Activated CD4-positive, alpha-beta memory T cell treated with anti-CD3 and anti-CD28 coated beads for 36 hours (primary cell): ENCODE measurements at regions of chr17 and their contacts with region 1.

Region 1: DNA sequence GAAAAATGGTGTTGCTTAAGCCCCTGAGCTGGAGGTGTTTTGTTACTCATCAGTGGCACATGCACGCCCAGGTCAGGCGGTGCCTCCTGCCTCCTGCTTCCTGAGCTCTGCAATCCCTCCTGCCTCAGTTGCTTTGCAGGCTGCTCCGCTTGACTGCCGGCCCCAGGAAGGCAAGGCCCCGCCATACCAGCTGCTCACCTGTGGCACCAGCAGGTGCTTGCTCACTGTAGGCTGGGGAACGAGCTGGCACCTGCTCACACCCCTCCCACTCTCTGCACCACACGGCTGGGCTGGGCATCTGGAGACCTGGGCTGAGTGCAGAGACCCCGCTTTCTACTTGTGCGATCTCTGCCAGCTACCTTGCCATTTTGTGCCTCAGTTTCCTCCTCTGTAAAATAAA is 200.2 kb downstream of the RBFOX3 start:
- DNase-seq: no peak
- H3K4me3 Mint-ChIP-seq: no peak overlapping the region
- H3K27ac Mint-ChIP-seq: no peak overlapping the region
- H3K4me1 Mint-ChIP-seq: no peaks in the 10 kb centered on the region
- H3K27me3 Mint-ChIP-seq: peaks cover 35% of the 10 kb centered on the region

Region 2: DNA sequence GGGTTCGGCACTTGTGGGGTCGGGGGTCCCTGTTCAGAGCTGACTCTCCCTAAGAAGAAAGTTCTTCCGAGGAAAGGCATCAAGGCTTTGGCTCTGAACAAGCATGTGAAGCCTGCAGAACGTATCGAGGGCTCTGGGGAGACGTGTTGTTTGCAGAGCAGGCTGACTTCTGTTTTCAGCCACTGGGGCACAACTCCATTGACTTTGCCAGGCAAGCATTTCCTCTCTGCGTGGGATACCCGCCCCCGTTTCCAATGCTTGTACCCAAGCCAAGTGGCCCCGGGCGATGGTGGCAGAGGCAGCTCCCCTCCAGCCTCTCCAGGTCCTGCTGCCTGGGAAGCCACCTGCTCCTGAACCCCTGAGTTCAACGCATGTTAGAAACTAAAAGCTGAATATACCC is 55.5 kb before region 1 on chr17:
- CTCF ChIA-PET with region 1: no interaction called
- POLR2A ChIA-PET with region 1: no interaction called
- intact Hi-C with region 1: no loop called
- DNase-seq: no peak
- H3K4me3 Mint-ChIP-seq: no peak overlapping the region
- H3K27ac Mint-ChIP-seq: no peak overlapping the region
- H3K4me1 Mint-ChIP-seq: no peaks in the 10 kb centered on the region
- H3K27me3 Mint-ChIP-seq: peaks cover 29% of the 10 kb centered on the region

Region 3: DNA sequence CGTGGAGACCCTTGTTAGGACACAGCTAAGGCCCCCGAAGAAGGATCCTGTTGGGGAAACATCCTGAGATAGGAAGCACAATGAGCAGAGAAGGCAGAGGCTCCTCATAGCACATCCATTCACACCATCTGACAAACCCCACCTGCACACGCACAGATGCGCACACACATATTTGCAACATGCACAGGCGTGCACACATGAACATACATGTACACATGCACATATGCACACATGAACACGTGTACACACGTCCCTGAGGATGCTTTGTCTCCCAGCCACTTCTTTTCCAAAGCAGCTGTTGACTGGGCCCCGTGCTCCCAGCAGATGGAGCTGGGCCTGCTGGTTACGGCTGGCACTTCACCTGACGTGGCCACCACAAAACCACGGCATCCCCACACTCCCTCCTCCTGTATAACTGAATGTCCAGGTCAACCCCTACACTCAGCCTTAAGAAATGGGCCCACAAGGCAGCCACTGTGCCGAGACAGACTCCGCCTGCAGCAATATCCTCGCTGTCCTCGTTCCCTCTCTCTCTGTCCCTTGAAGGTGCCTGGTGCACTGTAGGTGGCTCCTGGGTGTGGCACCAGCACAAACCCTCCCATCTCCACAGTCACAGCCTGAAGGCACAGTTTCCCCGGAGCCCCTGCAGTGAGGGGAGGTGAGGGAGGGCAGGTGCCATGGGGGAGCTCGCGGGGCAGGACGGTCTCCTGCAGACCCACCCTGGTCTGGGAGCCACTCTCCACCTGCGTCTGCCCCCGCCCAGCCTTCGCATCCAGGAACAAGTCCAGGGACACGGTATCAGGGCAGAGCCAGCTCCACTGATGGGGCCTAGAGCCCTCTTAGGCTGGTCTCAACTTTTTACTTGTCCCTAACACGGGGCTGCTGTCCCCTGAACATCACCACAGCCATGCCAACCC is 17.2 kb after region 1 on chr17:
- CTCF ChIA-PET with region 1: no interaction called
- POLR2A ChIA-PET with region 1: no interaction called
- intact Hi-C with region 1: loop called (anchors 1 kb)
- DNase-seq: no peak
- H3K4me3 Mint-ChIP-seq: no peak overlapping the region
- H3K27ac Mint-ChIP-seq: no peak overlapping the region
- H3K4me1 Mint-ChIP-seq: no peaks in the 10 kb centered on the region
- H3K27me3 Mint-ChIP-seq: peaks cover 23% of the 10 kb centered on the region